Endothelial cell of umbilical vein (primary cell): ENCODE measurements at regions of chr17 and their contacts with region 1.

Region 1: DNA sequence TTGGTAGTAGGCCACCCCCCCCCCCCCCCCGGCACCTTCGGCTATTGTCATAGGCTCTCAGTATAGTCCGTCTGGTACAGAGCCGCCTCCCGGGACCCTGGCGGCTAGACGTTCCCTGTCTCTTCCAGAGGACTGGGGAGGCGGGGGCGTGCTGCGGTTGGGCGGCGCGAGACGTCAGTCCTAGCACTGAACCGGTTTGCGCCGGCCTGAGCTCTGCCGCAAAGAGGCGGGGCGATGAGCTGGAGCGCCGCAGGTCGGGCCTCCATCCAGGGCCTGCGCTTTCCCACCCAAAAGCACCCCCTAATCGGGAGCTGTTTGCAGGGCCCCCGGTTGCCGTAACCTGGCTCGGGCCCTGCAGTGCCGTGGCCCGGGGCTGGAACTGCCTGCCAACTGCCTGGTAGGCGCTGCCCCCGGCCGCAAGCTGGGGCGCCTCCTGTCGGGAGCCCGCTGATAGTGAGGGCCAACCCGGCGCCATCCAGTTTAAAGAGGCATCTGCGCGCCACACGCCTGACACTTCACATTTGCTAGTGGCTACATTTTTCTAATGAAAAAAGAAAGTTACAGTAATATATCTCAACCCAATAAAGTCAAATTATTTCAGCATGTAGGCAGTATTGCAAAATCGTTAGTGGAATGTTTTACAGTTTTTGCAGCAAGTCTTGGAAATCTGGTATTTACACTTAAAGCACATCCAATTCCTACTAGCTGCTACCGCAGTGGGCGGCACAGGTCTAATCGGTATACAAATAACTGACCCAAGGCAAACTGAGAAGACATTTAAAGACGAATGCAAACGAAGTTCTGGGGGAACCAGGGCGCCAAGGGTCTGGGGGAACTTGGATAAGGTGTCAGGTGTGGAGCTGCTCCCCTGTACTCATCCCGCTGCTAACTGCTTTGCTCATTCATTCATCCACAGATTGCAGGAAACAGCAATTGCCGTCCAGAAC is 748 bp upstream of the USP22 start:
- DNase-seq: peak; percentile 98
- H3K4me3 ChIP-seq: peak overlapping the region; percentile 47 to 60 (median 57)
- H3K27ac ChIP-seq: peak overlapping the region; percentile 91
- H3K4me1 ChIP-seq: peaks cover 22% of the 10 kb centered on the region
- H3K27me3 ChIP-seq: peaks cover 0 to 3% of the 10 kb centered on the region in 2 experiments
- CTCF ChIP-seq: peak; percentile 89 to 90
- POLR2A ChIP-seq: peak; percentile 55

Region 2: GRCh38 chr17:20908373-20909273 is 134.9 kb before region 1 on chr17:
- CTCF ChIA-PET with region 1: no interaction called
- POLR2A ChIA-PET with region 1: no interaction called
- dilution Hi-C with region 1: no loop called
- intact Hi-C with region 1: loop called (anchors 5 kb)
- DNase-seq: peak; percentile 87
- H3K4me3 ChIP-seq: peak overlapping the region in 2 of 3 experiments; percentile 37 to 44
- H3K27ac ChIP-seq: peak overlapping the region; percentile 19
- H3K4me1 ChIP-seq: peaks cover 2% of the 10 kb centered on the region
- H3K27me3 ChIP-seq: no peaks in the 10 kb centered on the region
- CTCF ChIP-seq: peak; percentile 64 to 73
- POLR2A ChIP-seq: no peak

Region 3: GRCh38 chr17:21072745-21073197 is 29.2 kb after region 1 on chr17:
- CTCF ChIA-PET with region 1: no interaction called
- POLR2A ChIA-PET with region 1: no interaction called
- dilution Hi-C with region 1: no loop called
- intact Hi-C with region 1: no loop called
- DNase-seq: no peak
- H3K4me3 ChIP-seq: no peak overlapping the region
- H3K27ac ChIP-seq: no peak overlapping the region
- H3K4me1 ChIP-seq: no peaks in the 10 kb centered on the region
- H3K27me3 ChIP-seq: peaks cover 0 to 5% of the 10 kb centered on the region in 2 experiments
- CTCF ChIP-seq: no peak
- POLR2A ChIP-seq: no peak

Region 4: DNA sequence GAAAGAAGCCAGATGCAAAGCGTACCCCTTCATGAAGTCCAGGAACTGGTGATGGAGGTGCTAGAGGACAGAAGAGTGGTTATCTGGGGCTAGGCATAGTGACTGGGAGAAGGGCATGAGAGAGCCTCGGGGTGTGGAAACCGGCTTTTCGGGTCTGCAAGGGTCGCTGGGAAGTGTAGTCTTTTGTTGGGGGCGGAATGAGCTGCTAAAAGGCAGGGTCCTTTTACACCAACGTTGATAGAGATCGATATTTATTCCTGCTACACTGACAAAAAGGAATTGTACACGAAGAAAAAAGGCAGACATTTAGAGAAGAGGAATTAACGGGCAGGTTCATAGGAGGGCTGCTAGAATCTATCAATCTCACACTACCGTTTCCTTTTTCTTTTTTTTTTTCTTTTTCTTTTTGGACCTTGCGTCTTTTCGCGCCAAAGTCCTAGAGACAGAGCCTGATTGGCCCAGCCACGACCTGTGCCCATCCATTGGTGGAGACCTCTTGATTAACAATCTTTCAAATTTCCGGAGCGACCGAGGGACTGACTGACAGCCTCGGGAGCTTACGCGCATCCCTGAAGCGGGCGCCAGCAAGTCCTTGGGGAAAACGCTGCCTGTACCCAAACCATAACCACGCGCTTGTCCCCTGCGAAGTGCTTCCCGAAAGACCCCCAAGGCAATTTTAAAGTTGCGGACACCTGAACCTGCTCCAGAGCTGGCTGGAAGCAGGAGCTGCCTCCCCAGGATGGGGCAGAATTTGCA is 55.6 kb after region 1 on chr17:
- CTCF ChIA-PET with region 1: interaction called, 27 read pairs
- POLR2A ChIA-PET with region 1: interaction called, 5 read pairs
- dilution Hi-C with region 1: no loop called
- intact Hi-C with region 1: loop called (anchors 1 kb)
- DNase-seq: peak; percentile 72
- H3K4me3 ChIP-seq: peak overlapping the region; percentile 39 to 82 (median 66)
- H3K27ac ChIP-seq: no peak overlapping the region
- H3K4me1 ChIP-seq: peaks cover 5% of the 10 kb centered on the region
- H3K27me3 ChIP-seq: peaks cover 0 to 2% of the 10 kb centered on the region in 2 experiments
- CTCF ChIP-seq: no peak
- POLR2A ChIP-seq: no peak

Region 5: DNA sequence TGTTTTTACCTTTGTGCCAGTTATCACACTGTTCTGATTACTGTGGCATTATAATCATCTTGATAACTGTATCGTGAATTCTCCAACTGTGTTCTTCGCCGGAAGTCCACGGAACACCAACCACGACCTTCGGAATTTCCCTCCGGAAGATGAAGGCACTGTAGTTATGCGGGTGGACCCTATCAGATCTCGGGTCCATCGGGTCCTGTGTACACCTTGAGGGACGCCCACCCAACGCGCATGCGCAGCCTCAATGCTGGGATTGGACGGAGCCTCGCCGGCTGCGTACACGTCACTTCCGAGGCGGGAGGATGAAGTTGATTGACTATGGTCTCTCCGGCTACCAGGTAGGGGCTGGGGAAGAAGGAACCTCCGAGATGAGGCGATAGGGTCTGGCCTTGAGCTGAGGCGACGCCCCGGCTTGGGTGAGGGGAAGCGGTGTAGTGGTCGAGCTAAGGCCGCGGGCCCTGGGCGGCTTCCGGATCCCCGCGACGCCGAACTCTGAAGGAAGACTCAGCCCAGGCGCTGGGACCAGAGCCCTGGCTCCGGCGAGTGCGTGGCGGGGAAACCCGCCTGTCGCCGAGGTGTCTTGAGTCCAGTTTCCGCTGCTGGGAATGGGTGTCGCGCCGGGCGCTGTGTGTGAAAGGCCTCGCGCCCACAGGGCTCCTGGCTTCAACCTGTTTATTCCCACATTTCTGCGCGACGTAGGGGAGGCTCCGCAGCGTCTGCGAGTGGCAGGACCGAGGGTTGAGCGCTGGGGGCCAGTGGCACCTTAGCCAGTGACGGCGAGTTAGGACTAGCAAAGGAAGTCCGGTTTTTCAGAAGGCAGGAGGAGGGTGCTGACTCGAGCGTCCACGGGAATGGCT is 83.3 kb after region 1 on chr17 and contains the start of gene DHRS7B:
- CTCF ChIA-PET with region 1: no interaction called
- POLR2A ChIA-PET with region 1: no interaction called
- dilution Hi-C with region 1: no loop called
- intact Hi-C with region 1: loop called (anchors 1 kb)
- DNase-seq: peak; percentile 93
- H3K4me3 ChIP-seq: peak within 1 kb of the TSS; percentile 47 to 84 (median 67)
- H3K27ac ChIP-seq: peak within 1 kb of the TSS; percentile 73
- H3K4me1 ChIP-seq: peaks cover 20% of the 10 kb centered on the region
- H3K27me3 ChIP-seq: peaks cover 0 to 2% of the 10 kb centered on the region in 2 experiments
- CTCF ChIP-seq: no peak
- POLR2A ChIP-seq: no peak
- total RNA-seq, gene DHRS7B: 12.7 and 14.0 TPM in 2 replicates

Region 6: GRCh38 chr17:21252796-21253645 is 209.5 kb after region 1 on chr17 and contains the start of gene NATD1:
- CTCF ChIA-PET with region 1: no interaction called
- POLR2A ChIA-PET with region 1: no interaction called
- dilution Hi-C with region 1: no loop called
- intact Hi-C with region 1: loop called (anchors 1 kb)
- DNase-seq: peak; percentile 80
- H3K4me3 ChIP-seq: peak within 1 kb of the TSS; percentile 14 to 61 (median 40)
- H3K27ac ChIP-seq: no peak within 1 kb of the TSS
- H3K4me1 ChIP-seq: peaks cover 8% of the 10 kb centered on the region
- H3K27me3 ChIP-seq: no peaks in the 10 kb centered on the region
- CTCF ChIP-seq: no peak
- POLR2A ChIP-seq: no peak
- total RNA-seq, gene NATD1: 7.2 and 8.1 TPM in 2 replicates

Region 7: DNA sequence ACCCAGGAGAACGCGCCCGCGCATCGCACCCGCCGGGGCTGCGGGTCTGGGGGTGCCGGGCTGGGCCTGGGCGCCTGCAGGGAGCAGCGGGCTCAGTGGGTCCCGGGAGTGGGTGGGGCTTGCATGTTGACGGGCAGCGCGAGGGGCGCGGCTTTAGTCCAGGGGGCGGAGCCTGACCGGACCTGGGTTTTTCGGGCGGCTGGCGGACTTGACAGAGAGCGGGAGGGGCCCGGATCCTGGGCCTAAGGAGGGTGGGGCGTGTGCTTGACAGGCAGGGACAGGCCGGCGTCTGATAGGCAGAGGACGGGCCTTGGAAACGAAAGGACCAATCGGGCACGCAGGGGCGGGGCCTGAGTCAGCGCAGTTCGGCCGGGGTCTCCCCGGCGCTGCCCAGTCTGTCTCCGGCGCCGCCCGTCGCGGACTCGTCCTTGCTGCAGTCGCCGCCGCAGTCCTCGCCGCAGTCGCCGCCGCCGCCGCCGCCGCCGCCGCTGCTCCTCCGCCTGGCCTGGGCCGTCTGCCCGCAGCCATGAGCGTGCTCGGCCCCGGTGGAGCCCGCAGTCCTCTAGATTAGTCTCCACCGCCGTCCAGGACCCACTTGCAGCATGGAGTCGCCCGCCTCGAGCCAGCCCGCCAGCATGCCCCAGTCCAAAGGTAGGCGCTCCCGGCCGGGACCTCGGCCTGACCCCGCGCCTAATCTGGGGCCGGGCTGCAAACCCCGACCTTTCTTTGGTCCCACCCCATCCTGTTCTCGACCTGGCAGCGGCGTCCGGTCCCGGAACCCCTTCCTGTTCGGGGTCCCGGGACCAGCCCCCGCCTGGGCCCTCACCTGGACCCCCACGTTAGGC is 241.0 kb after region 1 on chr17 and contains the start of gene MAP2K3:
- CTCF ChIA-PET with region 1: interaction called, 10 read pairs
- POLR2A ChIA-PET with region 1: no interaction called
- dilution Hi-C with region 1: no loop called
- intact Hi-C with region 1: loop called (anchors 2 kb)
- DNase-seq: peak; percentile 99
- H3K4me3 ChIP-seq: peak within 1 kb of the TSS; percentile 69 to 75 (median 74)
- H3K27ac ChIP-seq: peak within 1 kb of the TSS; percentile 99
- H3K4me1 ChIP-seq: peaks cover 48% of the 10 kb centered on the region
- H3K27me3 ChIP-seq: no peaks in the 10 kb centered on the region
- CTCF ChIP-seq: no peak
- POLR2A ChIP-seq: peak; percentile 82
- total RNA-seq, gene MAP2K3: 33.2 and 36.3 TPM in 2 replicates

Region 8: DNA sequence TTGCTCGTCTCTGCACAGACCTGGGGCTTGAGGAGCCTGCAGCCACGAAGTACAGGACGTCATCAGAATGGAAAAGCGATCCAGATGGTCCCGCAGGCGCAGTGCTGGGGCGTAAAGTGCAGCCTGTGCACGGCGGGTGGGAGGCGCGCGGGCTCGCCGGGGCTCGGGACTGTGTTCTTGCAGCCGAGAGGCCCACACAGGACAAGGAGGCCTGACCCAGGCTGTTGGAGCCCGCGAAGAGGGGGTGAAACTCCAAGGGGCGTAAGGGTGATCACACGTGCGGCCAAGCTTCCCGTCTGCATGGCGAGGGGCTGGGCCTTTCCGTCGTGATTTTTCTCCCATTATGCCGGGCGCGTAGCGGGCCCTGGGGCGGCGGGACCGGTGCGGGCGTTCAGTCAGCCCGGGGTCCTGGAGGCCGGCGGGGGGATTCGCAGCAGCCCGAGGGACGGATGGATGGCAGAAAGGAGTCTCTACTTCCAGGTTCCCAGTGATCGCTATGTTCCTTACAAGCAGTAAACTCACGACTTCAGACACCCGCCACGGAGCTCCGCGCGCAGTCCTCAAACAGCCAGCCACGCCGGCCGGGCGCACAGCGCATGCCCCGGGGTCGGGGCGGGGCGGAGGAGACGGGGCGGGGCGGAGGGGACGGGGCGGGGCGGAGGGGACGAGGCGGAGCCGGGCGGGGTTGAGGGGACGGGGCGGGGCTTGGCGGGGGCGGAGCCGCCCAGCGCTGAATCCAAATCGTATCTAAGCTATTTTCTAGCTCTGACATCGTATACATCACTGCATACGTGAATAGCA is 507.7 kb after region 1 on chr17:
- CTCF ChIA-PET with region 1: no interaction called
- POLR2A ChIA-PET with region 1: interaction called, 4 read pairs
- dilution Hi-C with region 1: no loop called
- intact Hi-C with region 1: loop called (anchors 2 kb)
- DNase-seq: peak; percentile 88
- H3K4me3 ChIP-seq: peak overlapping the region; percentile 54 to 82 (median 75)
- H3K27ac ChIP-seq: peak overlapping the region; percentile 41
- H3K4me1 ChIP-seq: peaks cover 7% of the 10 kb centered on the region
- H3K27me3 ChIP-seq: no peaks in the 10 kb centered on the region
- CTCF ChIP-seq: no peak
- POLR2A ChIP-seq: peak; percentile 75